GM18951 (cell line): ENCODE measurements at regions of chr7 and their contacts with region 1.

Region 1: DNA sequence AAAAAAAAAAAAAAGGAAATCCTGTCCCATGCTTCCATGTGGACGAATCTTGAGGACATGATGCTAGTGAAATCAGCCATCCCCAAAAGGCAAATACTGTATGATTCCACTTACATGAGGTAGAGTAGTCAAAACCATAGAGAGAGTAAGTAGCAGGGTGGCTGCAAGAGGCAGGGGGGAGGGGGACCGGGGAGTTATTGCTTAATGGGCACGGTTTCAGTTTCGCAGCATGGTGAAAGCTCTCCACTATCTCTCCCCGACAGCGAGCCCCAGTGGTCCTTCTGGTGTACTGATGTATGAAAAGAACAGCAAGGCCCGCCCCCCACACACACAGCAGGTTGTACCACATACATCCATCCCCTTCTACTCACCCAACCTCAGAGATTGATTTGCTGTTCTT is 32.8 kb downstream of the NOD1 start:
- POLR2A ChIP-seq: no peak

Region 2: DNA sequence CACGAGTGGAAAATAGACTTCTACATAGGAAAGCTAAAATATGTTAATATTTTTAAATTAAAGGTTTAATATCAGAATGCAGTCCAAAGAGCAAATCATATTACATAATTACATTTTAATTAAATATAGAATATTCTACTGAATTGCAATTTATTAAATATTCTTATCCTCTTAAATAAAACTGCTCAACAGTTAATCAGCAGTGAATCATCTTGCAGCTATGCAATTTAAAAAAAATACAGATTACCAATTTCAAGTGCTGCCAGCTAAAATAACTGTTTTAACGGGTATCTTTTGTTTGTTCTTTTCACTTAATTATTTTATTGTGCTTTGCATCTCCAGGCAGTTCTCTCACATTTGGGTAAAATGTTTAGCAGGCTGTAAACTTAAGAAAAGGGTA is 79.2 kb before region 1 on chr7:
- in situ Hi-C with region 1: no loop called
- POLR2A ChIP-seq: no peak

Region 3: GRCh38 chr7:30412810-30413504 is 32.8 kb before region 1 on chr7:
- in situ Hi-C with region 1: loop called (anchors 5 kb)
- POLR2A ChIP-seq: no peak

Region 4: DNA sequence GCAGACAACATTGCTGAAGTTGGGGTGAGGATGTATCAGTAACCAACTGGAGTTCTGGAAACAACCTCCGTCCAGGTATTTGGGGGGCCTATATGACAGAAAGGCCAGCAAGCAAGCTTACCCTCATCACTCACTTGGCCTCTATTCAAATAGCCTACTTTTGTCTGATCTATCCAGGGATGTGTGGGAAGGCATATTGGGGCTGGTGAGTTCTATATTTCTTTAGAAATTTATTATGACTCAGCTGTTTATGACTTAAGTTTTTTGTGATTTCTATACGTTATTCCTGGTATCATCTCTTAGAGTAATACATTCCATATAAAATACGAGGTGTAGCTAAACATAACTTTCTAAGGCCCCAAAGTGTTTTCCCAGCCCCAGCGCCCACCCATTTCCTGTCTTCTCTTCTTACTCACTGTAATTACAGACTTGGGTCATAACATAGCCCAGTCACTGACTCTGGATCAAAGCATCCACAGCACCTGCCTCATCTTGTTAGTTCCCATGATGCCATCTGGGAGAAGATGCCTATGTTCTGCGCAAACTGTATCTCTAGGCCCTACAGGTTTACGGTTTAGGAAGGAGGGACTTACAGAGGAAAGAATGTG is 167.0 kb after region 1 on chr7:
- in situ Hi-C with region 1: no loop called
- POLR2A ChIP-seq: no peak